Ascending aorta (tissue), 2 donors: ENCODE measurements at regions of chr11 and their contacts with region 1.

Region 1: DNA sequence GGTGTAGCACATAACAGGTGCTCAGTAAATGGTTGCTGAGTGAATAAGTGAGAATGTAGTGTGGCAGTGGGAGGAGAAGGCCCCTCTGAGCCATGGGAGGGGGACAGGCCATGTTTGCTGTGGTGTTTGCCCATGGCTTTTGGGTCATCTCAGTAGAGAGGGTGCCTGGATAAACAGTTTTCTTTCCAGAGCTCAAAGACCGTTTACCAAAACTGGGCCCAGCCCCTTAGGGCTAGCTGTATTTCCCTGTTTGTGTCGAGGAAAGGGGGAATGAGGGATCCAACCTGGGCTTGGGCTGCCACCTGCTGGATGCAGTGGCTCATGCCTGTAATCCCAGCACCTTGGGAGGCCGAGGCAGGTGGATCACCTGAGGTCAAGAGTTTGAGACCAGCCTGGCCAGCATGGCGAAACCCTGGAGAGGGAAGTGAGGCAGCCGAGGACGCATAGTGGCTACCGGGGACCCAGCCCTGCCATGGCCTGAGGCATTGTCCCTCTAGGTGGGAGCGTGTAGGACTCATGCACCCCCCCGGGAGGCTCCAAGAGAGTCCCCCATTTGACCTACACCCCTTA is 8.7 kb upstream of the LTO1 start:
- DNase-seq: no peak
- H3K4me3 ChIP-seq: no peak overlapping the region
- H3K27ac ChIP-seq: no peak overlapping the region
- H3K4me1 ChIP-seq: peaks cover 0 to 6% of the 10 kb centered on the region in 2 donors
- H3K27me3 ChIP-seq: no peaks in the 10 kb centered on the region
- CTCF ChIP-seq: no peak

Region 2: DNA sequence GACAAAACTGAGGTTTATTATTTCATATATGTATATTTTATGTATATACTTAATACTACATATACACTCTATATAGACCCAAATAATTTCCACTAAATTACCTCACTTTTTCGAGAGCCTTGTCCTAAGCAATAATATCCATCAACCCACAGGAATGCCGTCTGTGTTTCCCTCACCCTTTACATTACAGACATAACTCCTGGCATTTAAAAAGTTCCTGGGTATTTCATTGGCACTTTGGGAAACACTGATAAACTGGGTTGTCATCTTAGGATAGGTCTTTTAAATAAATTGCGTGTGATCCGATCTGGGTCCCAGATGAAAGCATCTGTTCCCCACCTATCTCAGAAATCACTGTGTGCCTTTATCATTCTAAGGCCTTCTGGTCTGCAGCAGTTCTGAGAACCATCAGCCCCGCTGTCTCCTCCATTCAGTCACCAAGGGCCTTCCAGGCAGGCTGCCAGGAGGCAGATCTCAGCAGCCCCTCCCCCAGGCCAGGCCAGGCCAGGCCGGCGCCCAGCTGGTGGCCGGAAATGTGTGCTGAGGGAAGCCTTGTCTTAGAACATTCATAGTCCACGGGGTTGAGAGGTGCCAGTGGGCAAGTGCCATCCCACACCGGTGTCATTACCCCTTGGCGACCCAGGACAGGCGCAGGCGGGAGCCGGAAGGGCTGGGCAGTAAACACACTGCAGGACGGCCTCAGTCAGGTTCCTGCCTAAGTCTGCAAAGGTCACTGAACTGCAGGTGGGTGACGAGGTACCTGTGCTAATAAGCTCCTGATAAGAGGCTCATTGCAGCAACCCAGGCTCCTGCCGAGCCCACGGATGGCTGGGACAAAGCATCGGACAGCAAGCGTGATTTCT is 16.7 kb after region 1 on chr11:
- intact Hi-C with region 1: no loop called
- DNase-seq: no peak
- H3K4me3 ChIP-seq: no peak overlapping the region
- H3K27ac ChIP-seq: no peak overlapping the region
- H3K4me1 ChIP-seq: peaks cover 0 to 14% of the 10 kb centered on the region in 2 donors
- H3K27me3 ChIP-seq: peaks cover 16% of the 10 kb centered on the region
- CTCF ChIP-seq: no peak

Region 3: DNA sequence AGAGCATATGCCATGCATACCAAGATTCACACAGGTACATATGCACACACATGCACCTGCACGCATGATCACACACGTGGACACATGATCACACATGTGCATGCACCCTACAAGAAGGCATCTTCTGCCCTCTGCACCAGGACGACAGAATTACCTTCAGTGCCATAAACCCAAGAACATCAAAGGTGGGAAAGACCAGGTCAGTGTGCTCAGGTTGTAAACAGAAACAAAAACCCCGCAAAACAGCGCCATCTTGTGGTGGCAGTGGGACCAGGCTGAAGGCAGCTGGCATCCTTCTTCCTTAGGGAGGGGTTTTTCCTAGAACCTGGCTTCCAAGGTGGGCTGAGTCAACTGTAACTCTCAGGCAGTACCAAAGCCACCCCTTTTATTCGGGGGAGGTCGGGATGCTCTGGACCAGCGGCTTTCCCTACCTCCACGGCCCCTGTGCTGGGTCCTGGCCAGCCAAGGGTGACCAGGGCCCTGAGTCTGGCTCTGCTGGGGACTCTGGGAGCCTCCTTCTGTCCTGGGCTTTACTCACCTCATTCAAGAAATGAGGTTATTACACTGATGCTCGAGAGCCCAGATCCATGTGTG is 204.7 kb after region 1 on chr11:
- intact Hi-C with region 1: loop called (anchors 5 kb)
- DNase-seq: no peak
- H3K4me3 ChIP-seq: no peak overlapping the region
- H3K27ac ChIP-seq: no peak overlapping the region
- H3K4me1 ChIP-seq: no peaks in the 10 kb centered on the region
- H3K27me3 ChIP-seq: no peaks in the 10 kb centered on the region
- CTCF ChIP-seq: peak; percentile 60 to 91 (median 67)

Region 4: GRCh38 chr11:69909561-69910496 is 226.0 kb after region 1 on chr11:
- intact Hi-C with region 1: loop called (anchors 5 kb)
- DNase-seq: no peak
- H3K4me3 ChIP-seq: peak overlapping the region in 1 of 2 donors; percentile 4
- H3K27ac ChIP-seq: no peak overlapping the region
- H3K4me1 ChIP-seq: peaks cover 14 to 40% of the 10 kb centered on the region in 2 donors
- H3K27me3 ChIP-seq: no peaks in the 10 kb centered on the region
- CTCF ChIP-seq: peak; percentile 39 to 72 (median 67)

Region 5: DNA sequence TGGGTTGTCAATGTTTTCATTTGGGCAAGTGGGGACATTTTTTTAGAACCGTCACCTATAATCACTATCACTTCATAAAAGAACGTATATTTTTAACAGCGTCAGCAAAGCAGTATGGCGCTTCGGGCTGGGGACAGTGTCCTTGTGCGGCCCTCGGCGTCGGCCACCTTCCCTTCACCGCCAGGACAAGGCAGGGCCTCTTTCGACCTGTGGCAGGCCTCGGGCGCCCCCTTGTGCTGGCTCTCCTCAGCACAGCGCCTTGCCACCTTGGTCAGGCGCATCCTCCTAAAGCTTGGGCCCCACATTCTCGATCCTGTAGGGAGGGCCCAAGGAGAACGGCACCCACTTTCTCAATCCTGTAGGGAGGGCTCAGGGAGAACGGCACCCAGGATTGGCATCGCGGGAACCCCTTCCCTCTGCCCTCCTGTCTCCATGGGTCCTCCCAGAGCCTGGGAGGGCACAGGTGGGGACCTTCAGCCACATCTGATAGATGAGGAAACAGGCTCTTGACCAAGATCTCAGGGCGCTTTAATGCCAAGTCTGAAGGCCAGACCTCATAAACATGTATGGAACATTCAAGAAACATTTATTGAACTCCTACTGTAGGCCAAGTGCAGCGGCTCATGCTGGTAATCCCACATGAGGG is 507.8 kb after region 1 on chr11:
- intact Hi-C with region 1: loop called (anchors 2 kb)
- DNase-seq: peak in 1 of 2 donors; percentile 85
- H3K4me3 ChIP-seq: no peak overlapping the region
- H3K27ac ChIP-seq: no peak overlapping the region
- H3K4me1 ChIP-seq: peaks cover 0 to 11% of the 10 kb centered on the region in 2 donors
- H3K27me3 ChIP-seq: no peaks in the 10 kb centered on the region
- CTCF ChIP-seq: peak; percentile 91 to 92 (median 92)